Breast epithelium (tissue), 4 donors: ENCODE measurements at regions of chr6 and their contacts with region 1.

Region 1: DNA sequence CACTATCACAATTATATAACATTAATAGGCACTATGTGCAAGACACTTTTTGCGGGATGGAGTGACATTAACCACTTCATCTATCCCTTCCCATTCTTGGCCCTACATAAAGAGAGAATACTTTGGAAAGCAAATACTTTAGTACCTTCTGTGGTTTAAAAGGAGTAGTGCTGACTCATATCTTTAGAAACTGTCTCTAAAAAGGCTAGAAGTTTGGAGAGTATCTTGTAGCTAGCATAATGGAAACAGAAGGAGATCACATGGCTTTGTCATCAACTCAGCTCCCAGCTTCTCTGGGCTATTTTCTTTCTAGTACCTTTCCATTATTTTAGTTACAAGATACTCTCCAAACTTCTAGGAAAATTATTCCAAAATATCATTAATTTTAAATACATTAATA is 157.5 kb downstream of the ADGRG6 start:
- DNase-seq: no peak
- H3K4me3 ChIP-seq: no peak overlapping the region
- H3K27ac ChIP-seq: no peak overlapping the region
- H3K4me1 ChIP-seq: no peaks in the 10 kb centered on the region
- H3K27me3 ChIP-seq: no peaks in the 10 kb centered on the region
- CTCF ChIP-seq: no peak
- POLR2A ChIP-seq: no peak

Region 2: DNA sequence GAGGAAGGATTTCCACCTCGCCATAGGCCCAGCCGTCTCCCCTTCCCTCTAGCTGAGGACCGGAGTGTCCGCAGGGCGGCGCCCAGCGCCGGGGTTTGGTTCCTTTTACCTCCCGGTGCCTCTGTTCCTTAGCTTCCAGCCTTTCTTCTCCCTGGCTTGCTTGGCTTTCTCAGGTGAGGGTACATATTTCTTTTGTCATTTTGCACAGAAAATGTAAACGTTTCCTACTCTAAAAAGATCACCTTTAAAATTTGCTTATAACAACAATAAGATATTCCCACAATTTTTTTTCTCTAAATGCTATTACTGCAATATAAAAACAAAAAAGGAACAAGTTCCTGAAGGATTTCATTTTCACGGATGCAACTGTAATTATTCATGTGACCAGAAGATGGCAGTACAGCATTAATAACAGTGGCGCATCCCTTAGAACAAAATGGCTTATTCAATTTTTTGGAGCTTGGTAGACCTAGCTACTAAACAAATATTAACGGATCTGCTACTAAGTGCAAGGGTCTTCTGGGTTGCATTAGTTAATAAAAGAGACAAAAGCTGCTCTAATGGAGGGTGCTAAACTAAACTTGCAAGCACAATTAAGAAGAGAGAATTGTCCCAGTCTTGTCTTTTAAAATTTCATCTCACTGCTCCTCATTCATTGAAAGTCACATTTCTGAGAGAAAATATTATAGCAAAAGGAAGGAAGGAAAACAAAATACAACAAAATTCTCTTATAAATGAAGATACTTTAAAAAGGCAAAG is 15.4 kb after region 1 on chr6:
- intact Hi-C with region 1: loop called (anchors 1 kb)
- DNase-seq: no peak
- H3K4me3 ChIP-seq: no peak overlapping the region
- H3K27ac ChIP-seq: no peak overlapping the region
- H3K4me1 ChIP-seq: no peaks in the 10 kb centered on the region
- H3K27me3 ChIP-seq: no peaks in the 10 kb centered on the region
- CTCF ChIP-seq: peak; percentile 45 to 82 (median 77)
- POLR2A ChIP-seq: no peak